ENCODE measurements at regions of chr4 and their contacts with region 1.

Region 1: GRCh38 chr4:40316782-40317635 is 18.1 kb upstream of the CHRNA9 start:
- DNase-seq: peak; percentile 71
- H3K4me3 Mint-ChIP-seq: peak overlapping the region; percentile 86
- H3K27ac Mint-ChIP-seq: peak overlapping the region; percentile 100
- H3K4me1 Mint-ChIP-seq: peaks cover 49% of the 10 kb centered on the region
- H3K27me3 Mint-ChIP-seq: no peaks in the 10 kb centered on the region

Region 2: DNA sequence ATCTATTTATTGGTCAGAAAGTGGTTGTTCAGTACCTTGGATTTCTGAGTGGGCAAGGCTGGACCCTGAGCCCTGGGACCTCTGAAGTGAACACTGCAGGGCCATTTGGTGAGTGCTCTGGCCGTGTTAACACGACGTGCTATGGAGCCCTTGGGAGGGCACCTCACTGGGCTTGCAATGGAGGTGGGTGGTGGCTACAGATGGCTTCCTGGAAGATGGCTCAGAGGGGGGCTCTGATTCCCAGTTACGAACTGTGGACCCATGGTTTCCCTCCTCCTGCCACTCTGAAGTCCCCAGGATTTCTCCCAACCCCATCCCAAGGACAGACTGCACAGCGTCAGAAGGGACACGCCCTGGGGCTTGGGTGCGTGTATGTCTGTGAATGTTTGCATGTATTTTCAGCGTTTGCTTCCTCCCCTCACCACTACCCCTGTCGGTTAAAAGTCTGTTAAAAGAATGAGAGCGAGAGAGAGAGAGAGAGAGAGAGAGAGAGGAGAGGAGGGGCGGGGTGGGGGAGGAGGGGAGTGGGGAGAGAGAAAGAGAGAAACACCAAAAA is 123.9 kb before region 1 on chr4:
- CTCF ChIA-PET with region 1: interaction called, 11 read pairs
- intact Hi-C with region 1: no loop called
- DNase-seq: peak; percentile 52
- H3K4me3 Mint-ChIP-seq: peak overlapping the region; percentile 85
- H3K27ac Mint-ChIP-seq: peak overlapping the region; percentile 98
- H3K4me1 Mint-ChIP-seq: peaks cover 67% of the 10 kb centered on the region
- H3K27me3 Mint-ChIP-seq: no peaks in the 10 kb centered on the region

Region 3: GRCh38 chr4:40255393-40256281 is 61.4 kb before region 1 on chr4:
- CTCF ChIA-PET with region 1: interaction called, 23 read pairs
- intact Hi-C with region 1: loop called (anchors 1 kb)
- DNase-seq: no peak
- H3K4me3 Mint-ChIP-seq: peak overlapping the region; percentile 0
- H3K27ac Mint-ChIP-seq: peak overlapping the region; percentile 75
- H3K4me1 Mint-ChIP-seq: peaks cover 77% of the 10 kb centered on the region
- H3K27me3 Mint-ChIP-seq: no peaks in the 10 kb centered on the region

Region 4: DNA sequence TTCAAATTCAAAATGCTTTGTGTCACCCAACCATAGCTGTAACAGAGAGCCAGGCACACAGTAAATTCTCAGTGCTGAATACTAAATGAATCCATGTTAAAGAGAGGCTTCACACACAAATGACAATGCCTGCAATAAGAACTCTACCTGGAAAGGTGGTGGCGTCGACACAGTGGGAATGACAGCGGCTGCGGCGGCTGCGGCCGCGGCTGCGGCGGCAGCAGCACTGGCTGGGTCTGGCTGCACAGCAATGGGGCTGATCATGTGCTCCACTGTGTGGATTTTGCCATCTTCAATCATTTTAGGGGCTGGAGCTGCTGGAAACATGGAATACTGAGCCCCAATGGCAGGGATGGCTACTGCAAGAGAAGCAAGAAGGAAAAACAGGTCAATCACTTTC is 115.5 kb after region 1 on chr4:
- CTCF ChIA-PET with region 1: no interaction called
- intact Hi-C with region 1: loop called (anchors 2 kb)
- DNase-seq: no peak
- H3K4me3 Mint-ChIP-seq: no peak overlapping the region
- H3K27ac Mint-ChIP-seq: peak overlapping the region; percentile 61
- H3K4me1 Mint-ChIP-seq: peaks cover 40% of the 10 kb centered on the region
- H3K27me3 Mint-ChIP-seq: no peaks in the 10 kb centered on the region

Region 5: GRCh38 chr4:42104521-42104920 is 1787.5 kb after region 1 on chr4:
- CTCF ChIA-PET with region 1: no interaction called
- intact Hi-C with region 1: no loop called
- DNase-seq: no peak
- H3K4me3 Mint-ChIP-seq: no peak overlapping the region
- H3K27ac Mint-ChIP-seq: no peak overlapping the region
- H3K4me1 Mint-ChIP-seq: no peaks in the 10 kb centered on the region
- H3K27me3 Mint-ChIP-seq: peaks cover 6% of the 10 kb centered on the region

Measured in activated naive CD4-positive, alpha-beta T cell treated with anti-CD3 and anti-CD28 coated beads for 36 hours (primary cell).